Naive thymus-derived CD4-positive, alpha-beta T cell (primary cell): ENCODE measurements at regions of chr4 and their contacts with region 1.

Region 1: GRCh38 chr4:56301181-56302076 is 85.9 kb downstream of the AASDH start:
- DNase-seq: peak; percentile 27 to 71 (median 67)
- ATAC-seq: peak; percentile 92
- H3K4me3 ChIP-seq: peak overlapping the region; percentile 13
- H3K4me3 Mint-ChIP-seq: peak overlapping the region; percentile 46 to 79 (median 64)
- H3K27ac ChIP-seq: no peak overlapping the region
- H3K27ac Mint-ChIP-seq: peak overlapping the region in 3 of 9 donors; percentile 4 to 41 (median 32)
- H3K4me1 ChIP-seq: no peaks in the 10 kb centered on the region
- H3K4me1 Mint-ChIP-seq: peaks cover 4 to 21% (median 16%) of the 10 kb centered on the region in 7 donors
- H3K27me3 ChIP-seq: no peaks in the 10 kb centered on the region
- H3K27me3 Mint-ChIP-seq: peaks cover 0 to 7% (median 0%) of the 10 kb centered on the region in 5 donors

Region 2: DNA sequence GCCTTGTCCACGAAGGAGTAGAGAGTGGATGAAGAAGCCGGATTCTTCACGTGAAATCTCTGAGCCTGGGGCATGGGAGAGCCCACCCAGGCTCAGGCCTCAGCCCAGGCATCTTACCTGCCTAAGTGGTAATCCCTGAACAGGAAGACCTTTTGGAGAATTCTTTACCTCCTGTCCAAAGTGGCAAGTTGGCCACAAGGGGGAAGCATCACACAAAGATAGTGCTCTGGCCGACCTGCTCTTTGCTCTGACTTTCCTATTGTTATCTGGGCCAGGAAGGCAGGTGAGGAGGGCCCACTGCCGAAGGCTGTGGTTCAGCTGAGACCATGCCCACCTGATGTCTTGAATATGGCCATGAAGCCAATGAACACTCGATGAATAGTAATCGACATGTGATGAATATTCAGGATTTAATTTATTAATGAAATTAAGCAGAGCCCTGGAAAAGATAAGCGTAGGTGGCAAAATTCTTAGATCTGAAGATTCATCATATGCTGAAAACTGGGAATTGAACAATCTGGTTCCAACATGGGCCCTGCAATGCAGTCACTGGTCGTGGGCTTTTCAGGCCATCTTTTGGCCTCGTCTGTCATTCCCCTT is 1978.5 kb before region 1 on chr4:
- CTCF ChIA-PET with region 1: no interaction called
- POLR2A ChIA-PET with region 1: no interaction called
- intact Hi-C with region 1: loop called in 1 of 2 experiments (anchors 2 kb)
- DNase-seq: peak in 8 of 9 donors; percentile 8 to 52 (median 42)
- ATAC-seq: peak; percentile 54
- H3K4me3 ChIP-seq: no peak overlapping the region
- H3K4me3 Mint-ChIP-seq: no peak overlapping the region
- H3K27ac ChIP-seq: no peak overlapping the region
- H3K27ac Mint-ChIP-seq: no peak overlapping the region
- H3K4me1 ChIP-seq: no peaks in the 10 kb centered on the region
- H3K4me1 Mint-ChIP-seq: peaks cover 0 to 12% (median 0%) of the 10 kb centered on the region in 7 donors
- H3K27me3 ChIP-seq: no peaks in the 10 kb centered on the region
- H3K27me3 Mint-ChIP-seq: peaks cover 0 to 3% (median 0%) of the 10 kb centered on the region in 5 donors

Region 3: GRCh38 chr4:55184600-55185523 is 1116.6 kb before region 1 on chr4:
- CTCF ChIA-PET with region 1: no interaction called
- POLR2A ChIA-PET with region 1: no interaction called
- intact Hi-C with region 1: loop called (anchors 2 to 10 kb)
- DNase-seq: peak in 6 of 9 donors; percentile 4 to 22 (median 15)
- ATAC-seq: no peak
- H3K4me3 ChIP-seq: no peak overlapping the region
- H3K4me3 Mint-ChIP-seq: no peak overlapping the region
- H3K27ac ChIP-seq: no peak overlapping the region
- H3K27ac Mint-ChIP-seq: no peak overlapping the region
- H3K4me1 ChIP-seq: no peaks in the 10 kb centered on the region
- H3K4me1 Mint-ChIP-seq: no peaks in the 10 kb centered on the region
- H3K27me3 ChIP-seq: no peaks in the 10 kb centered on the region
- H3K27me3 Mint-ChIP-seq: peaks cover 0 to 23% (median 17%) of the 10 kb centered on the region in 5 donors

Region 4: GRCh38 chr4:55546756-55547465 is 754.5 kb before region 1 on chr4 and contains the start of gene CLOCK:
- CTCF ChIA-PET with region 1: no interaction called
- POLR2A ChIA-PET with region 1: no interaction called
- intact Hi-C with region 1: loop called in 1 of 2 experiments (anchors 5 kb)
- DNase-seq: peak; percentile 79 to 87 (median 83)
- ATAC-seq: peak; percentile 82
- H3K4me3 ChIP-seq: peak within 1 kb of the TSS; percentile 82
- H3K4me3 Mint-ChIP-seq: peak within 1 kb of the TSS; percentile 88 to 96 (median 94)
- H3K27ac ChIP-seq: peak within 1 kb of the TSS; percentile 84
- H3K27ac Mint-ChIP-seq: peak within 1 kb of the TSS; percentile 87 to 92 (median 90)
- H3K4me1 ChIP-seq: peaks cover 5 to 8% of the 10 kb centered on the region in 2 donors
- H3K4me1 Mint-ChIP-seq: peaks cover 21 to 57% (median 40%) of the 10 kb centered on the region in 7 donors
- H3K27me3 ChIP-seq: no peaks in the 10 kb centered on the region
- H3K27me3 Mint-ChIP-seq: peaks cover 0 to 29% (median 0%) of the 10 kb centered on the region in 5 donors
- total RNA-seq, gene CLOCK: 7.9 to 12.6 (median 8.9) TPM

Region 5: DNA sequence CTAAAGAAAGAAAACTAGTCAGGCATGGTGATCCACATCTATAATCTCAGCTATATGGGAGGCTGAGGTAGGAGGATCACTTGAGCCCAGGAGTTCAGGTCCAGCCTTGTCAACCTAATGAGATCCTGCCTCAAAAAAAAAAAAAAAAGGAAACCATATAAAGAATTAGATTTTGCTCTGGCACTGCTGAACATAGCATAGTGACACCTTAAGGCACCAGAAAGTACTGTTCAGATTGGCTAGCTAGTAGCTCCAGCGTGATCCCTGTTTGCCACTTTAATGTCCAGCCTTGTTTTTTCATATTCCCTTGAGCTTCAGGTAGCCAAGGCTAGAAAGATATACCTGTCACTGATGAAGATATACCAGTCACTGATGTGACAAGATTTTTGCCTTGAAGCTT is 413.8 kb before region 1 on chr4:
- CTCF ChIA-PET with region 1: no interaction called
- POLR2A ChIA-PET with region 1: no interaction called
- intact Hi-C with region 1: loop called (anchors 5 kb)
- DNase-seq: no peak
- ATAC-seq: no peak
- H3K4me3 ChIP-seq: no peak overlapping the region
- H3K4me3 Mint-ChIP-seq: no peak overlapping the region
- H3K27ac ChIP-seq: no peak overlapping the region
- H3K27ac Mint-ChIP-seq: peak overlapping the region in 5 of 9 donors; percentile 47 to 83 (median 57)
- H3K4me1 ChIP-seq: no peaks in the 10 kb centered on the region
- H3K4me1 Mint-ChIP-seq: peaks cover 6 to 52% (median 29%) of the 10 kb centered on the region in 7 donors
- H3K27me3 ChIP-seq: no peaks in the 10 kb centered on the region
- H3K27me3 Mint-ChIP-seq: no peaks in the 10 kb centered on the region

Region 6: GRCh38 chr4:56048702-56049431 is 252.6 kb before region 1 on chr4:
- CTCF ChIA-PET with region 1: no interaction called
- POLR2A ChIA-PET with region 1: no interaction called
- intact Hi-C with region 1: loop called (anchors 1 kb)
- DNase-seq: peak in 6 of 9 donors; percentile 7 to 72 (median 16)
- ATAC-seq: peak; percentile 85
- H3K4me3 ChIP-seq: no peak overlapping the region
- H3K4me3 Mint-ChIP-seq: peak overlapping the region; percentile 55 to 78 (median 73)
- H3K27ac ChIP-seq: no peak overlapping the region
- H3K27ac Mint-ChIP-seq: no peak overlapping the region
- H3K4me1 ChIP-seq: peaks cover 3 to 6% of the 10 kb centered on the region in 2 donors
- H3K4me1 Mint-ChIP-seq: peaks cover 8 to 18% (median 12%) of the 10 kb centered on the region in 7 donors
- H3K27me3 ChIP-seq: peaks cover 6 to 10% of the 10 kb centered on the region in 2 donors
- H3K27me3 Mint-ChIP-seq: peaks cover 43 to 64% (median 55%) of the 10 kb centered on the region in 5 donors

Region 7: GRCh38 chr4:56183344-56183959 is 118.0 kb before region 1 on chr4:
- CTCF ChIA-PET with region 1: no interaction called
- POLR2A ChIA-PET with region 1: no interaction called
- intact Hi-C with region 1: no loop called
- DNase-seq: no peak
- ATAC-seq: no peak
- H3K4me3 ChIP-seq: no peak overlapping the region
- H3K4me3 Mint-ChIP-seq: no peak overlapping the region
- H3K27ac ChIP-seq: no peak overlapping the region
- H3K27ac Mint-ChIP-seq: no peak overlapping the region
- H3K4me1 ChIP-seq: no peaks in the 10 kb centered on the region
- H3K4me1 Mint-ChIP-seq: peaks cover 0 to 32% (median 11%) of the 10 kb centered on the region in 7 donors
- H3K27me3 ChIP-seq: no peaks in the 10 kb centered on the region
- H3K27me3 Mint-ChIP-seq: peaks cover 0 to 9% (median 4%) of the 10 kb centered on the region in 5 donors

Region 8: DNA sequence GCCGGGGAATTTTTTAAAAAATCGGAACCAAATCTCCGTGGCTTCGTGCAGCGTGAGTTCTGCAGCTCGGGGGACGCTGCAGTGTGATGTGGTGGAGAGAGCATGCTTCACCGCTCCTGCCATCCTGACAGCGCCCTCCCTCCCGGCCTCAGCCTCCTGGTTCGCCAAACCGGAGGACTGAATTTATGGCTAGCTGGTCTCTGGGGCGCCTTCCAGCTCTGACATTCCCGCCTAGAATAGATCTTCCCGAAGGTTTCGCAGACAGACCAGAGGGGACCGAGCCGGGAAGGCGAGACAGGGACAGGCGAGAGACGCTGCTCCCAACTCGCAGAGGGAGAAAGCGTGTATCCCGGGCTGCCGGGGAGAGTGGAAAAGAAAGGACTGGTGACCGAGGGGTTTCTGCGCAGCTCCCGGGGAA is 353.8 kb after region 1 on chr4:
- CTCF ChIA-PET with region 1: no interaction called
- POLR2A ChIA-PET with region 1: no interaction called
- intact Hi-C with region 1: no loop called
- DNase-seq: peak in 4 of 9 donors; percentile 14 to 26 (median 22)
- ATAC-seq: peak; percentile 33
- H3K4me3 ChIP-seq: peak overlapping the region; percentile 66
- H3K4me3 Mint-ChIP-seq: peak overlapping the region; percentile 85 to 99 (median 90)
- H3K27ac ChIP-seq: no peak overlapping the region
- H3K27ac Mint-ChIP-seq: peak overlapping the region in 7 of 9 donors; percentile 2 to 82 (median 28)
- H3K4me1 ChIP-seq: peaks cover 16 to 36% of the 10 kb centered on the region in 2 donors
- H3K4me1 Mint-ChIP-seq: peaks cover 16 to 59% (median 34%) of the 10 kb centered on the region in 7 donors
- H3K27me3 ChIP-seq: peaks cover 0 to 3% of the 10 kb centered on the region in 2 donors
- H3K27me3 Mint-ChIP-seq: peaks cover 9 to 43% (median 33%) of the 10 kb centered on the region in 5 donors